ENCODE measurements at regions of chr9 and their contacts with region 1.

Region 1: DNA sequence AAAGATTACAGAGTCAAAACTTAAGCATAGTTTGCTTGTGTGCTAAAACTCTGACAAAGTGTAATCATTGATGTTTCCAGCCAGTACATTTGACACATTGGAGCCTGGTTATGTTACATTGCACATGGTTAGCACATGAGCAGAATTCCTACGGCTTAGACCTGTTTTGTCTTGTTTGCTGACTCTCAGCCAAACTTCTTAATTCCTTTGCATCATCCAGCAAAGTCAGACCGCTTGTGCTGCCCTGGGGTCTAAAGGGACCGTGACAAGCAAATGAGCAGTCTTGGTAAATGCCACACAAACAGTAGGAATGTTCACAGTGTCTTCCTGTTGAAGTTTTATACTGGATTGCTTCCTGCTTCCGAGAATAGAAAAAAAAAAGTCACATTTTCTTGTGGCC is 72.0 kb upstream of the ENTREP1 start:
- DNase-seq: peak; percentile 6
- ATAC-seq: no peak
- H3K4me3 ChIP-seq: no peak overlapping the region
- H3K27ac ChIP-seq: no peak overlapping the region
- H3K4me1 ChIP-seq: no peaks in the 10 kb centered on the region
- H3K27me3 ChIP-seq: no peaks in the 10 kb centered on the region
- CTCF ChIP-seq: no peak
- POLR2A ChIP-seq: no peak
- RAD21 ChIP-seq: no peak

Region 2: DNA sequence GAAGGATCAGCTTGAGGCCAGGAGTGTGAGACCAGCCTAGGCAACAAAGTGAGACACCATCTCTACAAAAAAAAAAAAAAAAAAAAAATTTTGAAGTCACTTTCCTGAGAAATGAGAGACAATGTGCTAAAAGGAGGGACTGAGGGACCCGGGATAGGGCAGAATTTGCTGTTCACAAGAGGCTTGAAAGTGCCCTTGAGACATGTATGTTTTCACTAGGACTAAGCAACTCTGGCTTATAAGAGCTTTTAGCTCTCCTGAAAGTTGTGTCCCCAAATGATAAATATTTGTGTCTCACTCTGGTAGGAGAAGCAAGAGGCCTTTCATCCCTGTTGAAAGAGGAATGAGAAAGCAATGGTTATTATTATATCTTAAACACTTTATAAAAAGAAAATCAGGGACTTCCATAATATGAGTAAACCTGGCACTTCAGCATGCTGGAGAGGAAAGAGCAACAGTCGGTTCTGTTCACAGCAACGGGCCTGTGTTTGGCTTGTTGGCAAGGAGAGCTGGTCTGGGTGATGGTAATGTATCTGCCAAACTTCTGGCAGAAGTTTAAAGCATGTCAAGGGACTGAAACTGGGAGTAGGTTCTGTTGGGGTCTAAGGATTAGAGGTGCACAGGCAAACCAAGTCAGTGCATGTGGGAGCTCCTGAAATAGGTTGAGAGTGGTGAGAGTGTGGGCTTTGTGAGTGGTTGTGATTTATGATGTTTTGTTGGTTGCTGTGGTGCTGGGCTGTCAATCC is 104.1 kb after region 1 on chr9:
- CTCF ChIA-PET with region 1: no interaction called
- POLR2A ChIA-PET with region 1: no interaction called
- dilution Hi-C with region 1: no loop called
- in situ Hi-C with region 1: loop called (anchors 25 kb)
- intact Hi-C with region 1: no loop called
- DNase-seq: no peak
- ATAC-seq: no peak
- H3K4me3 ChIP-seq: no peak overlapping the region
- H3K27ac ChIP-seq: no peak overlapping the region
- H3K4me1 ChIP-seq: no peaks in the 10 kb centered on the region
- H3K27me3 ChIP-seq: peaks cover 9% of the 10 kb centered on the region
- CTCF ChIP-seq: no peak
- POLR2A ChIP-seq: no peak
- RAD21 ChIP-seq: no peak

Region 3: DNA sequence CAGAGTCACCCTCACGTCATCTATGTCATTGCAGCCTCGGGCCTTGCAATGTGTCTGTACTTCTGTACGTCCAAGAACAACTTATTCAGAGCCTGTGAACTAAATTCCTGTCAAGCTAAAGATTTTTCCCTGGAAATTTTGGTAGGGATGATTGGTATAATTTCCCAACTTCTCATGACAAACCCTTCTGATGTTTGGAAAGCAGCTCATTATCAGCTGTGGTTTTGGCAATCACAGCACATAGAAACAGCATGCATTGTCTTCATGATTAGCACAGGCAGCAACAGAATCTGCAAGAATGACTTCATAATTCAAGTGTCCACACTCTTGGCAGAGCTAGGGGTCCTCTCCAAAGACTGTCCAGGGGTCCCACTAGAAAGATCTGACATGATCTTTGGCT is 369.6 kb after region 1 on chr9:
- CTCF ChIA-PET with region 1: no interaction called
- POLR2A ChIA-PET with region 1: no interaction called
- dilution Hi-C with region 1: no loop called
- in situ Hi-C with region 1: no loop called
- intact Hi-C with region 1: no loop called
- DNase-seq: peak; percentile 46
- ATAC-seq: 0 out of 2 replicates have a peak, but pooled peaks have one; percentile 14
- H3K4me3 ChIP-seq: no peak overlapping the region
- H3K27ac ChIP-seq: no peak overlapping the region
- H3K4me1 ChIP-seq: 0 out of 2 replicates have a peak, but pooled peaks cover 1% of the 10 kb centered on the region
- H3K27me3 ChIP-seq: no peaks in the 10 kb centered on the region
- CTCF ChIP-seq: no peak
- POLR2A ChIP-seq: no peak
- RAD21 ChIP-seq: no peak

Measured in IMR-90 (cell line).